ENCODE measurements at regions of chr9 and their contacts with region 1.

Region 1: DNA sequence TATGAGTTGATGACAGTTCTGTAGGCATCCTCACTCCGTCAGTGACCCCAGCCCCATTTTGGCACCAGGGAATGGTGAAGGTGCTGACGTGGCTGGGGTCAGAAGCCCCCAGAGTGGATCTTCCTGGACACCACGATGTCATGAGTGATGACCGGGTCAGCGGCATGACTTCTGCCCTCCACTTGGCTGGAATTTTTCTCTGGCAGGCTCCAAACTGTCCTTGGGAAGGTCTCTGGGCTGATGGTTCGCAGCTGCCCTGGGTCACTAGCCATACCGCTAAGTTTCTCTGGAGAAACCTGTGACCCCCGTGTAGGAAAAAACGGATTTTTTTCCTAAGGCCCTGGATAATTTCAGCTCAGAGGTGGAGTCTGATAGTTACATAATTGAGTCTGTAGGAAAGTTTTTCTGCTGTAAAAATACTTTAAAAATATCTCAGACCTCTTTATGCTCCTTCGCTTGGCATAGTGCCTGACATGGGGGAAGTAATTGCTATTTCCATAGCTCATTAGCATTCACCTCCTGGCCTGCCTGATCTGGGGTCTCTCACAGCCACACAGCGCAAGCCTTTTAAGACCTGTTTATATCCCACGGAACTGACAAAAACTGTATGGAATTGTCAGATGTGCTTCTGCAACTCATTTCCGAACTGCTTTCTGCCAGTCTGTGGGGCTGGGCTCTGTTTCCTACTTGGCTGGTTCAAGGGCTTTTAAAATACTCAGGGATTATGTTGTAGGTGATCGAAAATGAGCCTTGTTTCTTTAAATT is 69.2 kb downstream of the ANGPTL2 start:
- DNase-seq: peak; percentile 17 to 55
- ATAC-seq: peak in 5 of 8 donors; percentile 5 to 47 (median 42)
- H3K4me3 ChIP-seq: no peak overlapping the region
- H3K27ac ChIP-seq: peak overlapping the region in 9 of 10 donors; percentile 36 to 81 (median 68)
- H3K4me1 ChIP-seq: peaks cover 22 to 100% (median 60%) of the 10 kb centered on the region in 9 donors
- H3K27me3 ChIP-seq: no peaks in the 10 kb centered on the region
- CTCF ChIP-seq: no peak

Region 2: DNA sequence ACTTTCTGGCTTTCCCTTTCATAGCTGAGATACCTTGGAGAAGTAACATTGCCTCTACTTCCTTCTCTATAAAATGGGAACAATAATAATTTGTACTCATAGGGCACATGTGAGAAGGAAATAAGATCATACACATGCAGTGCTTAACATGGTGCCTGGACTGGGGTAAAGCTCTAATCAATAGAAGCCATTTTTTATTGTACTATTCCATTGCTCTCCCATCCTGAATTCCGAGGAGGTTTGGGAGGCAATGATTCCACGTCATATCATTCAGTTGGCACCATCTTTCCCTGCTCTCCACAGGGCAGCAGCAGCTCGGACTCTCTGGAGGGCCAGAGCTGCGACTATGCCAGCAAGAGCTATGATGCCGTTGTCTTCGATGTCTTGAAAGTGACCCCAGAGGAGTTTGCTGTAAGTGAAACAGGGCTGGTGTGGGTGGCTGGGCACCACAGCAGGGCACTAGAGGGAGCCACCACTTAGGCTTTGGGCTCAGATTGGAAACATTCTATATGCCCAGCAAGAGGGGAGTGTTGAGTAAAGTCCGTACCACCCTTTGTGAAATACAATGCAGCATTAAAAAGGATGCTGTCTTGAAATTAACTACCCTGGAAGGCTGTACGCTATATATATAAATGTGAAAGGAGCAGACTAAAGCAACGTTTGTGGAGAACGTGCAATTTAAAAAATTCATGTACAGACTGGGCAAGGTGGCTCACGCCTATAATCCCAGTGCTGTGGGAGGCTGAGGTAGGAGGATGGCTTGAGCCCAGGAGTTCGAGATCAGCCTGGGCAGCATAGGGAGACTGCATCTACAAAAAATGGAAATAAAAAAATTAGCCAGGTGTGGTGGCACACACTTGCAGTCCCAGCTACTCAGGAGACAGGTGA is 87.5 kb before region 1 on chr9:
- intact Hi-C with region 1: loop called in 2 of 10 experiments (anchors 5 to 10 kb)
- DNase-seq: peak; percentile 52 to 55
- ATAC-seq: peak; percentile 65 to 88 (median 84)
- H3K4me3 ChIP-seq: no peak overlapping the region
- H3K27ac ChIP-seq: peak overlapping the region; percentile 3 to 81 (median 62)
- H3K4me1 ChIP-seq: peaks cover 0 to 34% (median 10%) of the 10 kb centered on the region in 9 donors
- H3K27me3 ChIP-seq: no peaks in the 10 kb centered on the region
- CTCF ChIP-seq: peak; percentile 59 to 89 (median 80)

Region 3: DNA sequence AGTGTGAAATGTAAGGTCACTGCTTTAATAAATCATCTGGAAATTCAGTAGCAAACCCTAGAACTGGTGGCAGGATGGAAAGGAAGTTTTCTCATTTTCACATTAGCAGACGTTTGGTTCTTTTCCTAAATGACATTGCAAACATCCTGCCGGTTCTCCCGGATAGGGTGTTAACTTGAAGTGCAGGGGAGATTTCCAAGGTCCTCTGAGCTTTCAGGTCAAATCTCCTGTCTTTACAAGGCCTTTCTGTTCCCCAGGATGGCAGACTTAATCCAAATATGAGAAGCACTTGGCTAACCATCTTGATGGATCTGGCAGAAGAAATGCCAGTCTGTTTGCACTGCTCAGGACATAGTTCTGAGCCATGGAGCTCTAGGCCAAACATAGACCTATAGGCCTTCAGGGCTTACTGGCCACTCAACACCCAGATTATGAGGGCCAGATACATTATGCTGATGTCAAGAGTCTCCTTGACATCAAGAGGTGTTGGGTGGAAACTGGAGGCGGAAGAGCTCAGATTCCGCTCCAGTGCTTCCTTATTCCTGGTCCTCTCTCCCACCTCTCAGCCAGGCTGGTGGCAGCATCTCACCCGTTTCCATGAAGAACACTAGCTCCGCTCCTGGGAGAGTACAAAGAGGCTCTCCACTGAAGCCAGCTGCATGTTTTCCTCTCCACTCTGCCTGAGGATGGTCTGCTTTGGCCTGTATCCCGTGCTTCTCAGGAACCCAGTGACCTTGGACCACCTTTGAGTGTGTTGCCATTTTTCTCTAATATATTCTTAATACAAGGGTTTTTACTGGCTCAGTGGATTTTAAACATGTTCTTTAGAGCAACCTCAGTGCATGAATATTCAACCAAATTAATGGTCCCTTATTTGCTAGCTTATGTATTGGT is 77.7 kb before region 1 on chr9:
- intact Hi-C with region 1: loop called in 1 of 10 experiments (anchors 10 kb)
- DNase-seq: no peak
- ATAC-seq: peak in 3 of 8 donors; percentile 20 to 60 (median 53)
- H3K4me3 ChIP-seq: no peak overlapping the region
- H3K27ac ChIP-seq: peak overlapping the region in 9 of 10 donors; percentile 7 to 72 (median 35)
- H3K4me1 ChIP-seq: peaks cover 0 to 30% (median 10%) of the 10 kb centered on the region in 9 donors
- H3K27me3 ChIP-seq: peaks cover 0 to 11% (median 0%) of the 10 kb centered on the region in 7 donors
- CTCF ChIP-seq: no peak

Region 4: DNA sequence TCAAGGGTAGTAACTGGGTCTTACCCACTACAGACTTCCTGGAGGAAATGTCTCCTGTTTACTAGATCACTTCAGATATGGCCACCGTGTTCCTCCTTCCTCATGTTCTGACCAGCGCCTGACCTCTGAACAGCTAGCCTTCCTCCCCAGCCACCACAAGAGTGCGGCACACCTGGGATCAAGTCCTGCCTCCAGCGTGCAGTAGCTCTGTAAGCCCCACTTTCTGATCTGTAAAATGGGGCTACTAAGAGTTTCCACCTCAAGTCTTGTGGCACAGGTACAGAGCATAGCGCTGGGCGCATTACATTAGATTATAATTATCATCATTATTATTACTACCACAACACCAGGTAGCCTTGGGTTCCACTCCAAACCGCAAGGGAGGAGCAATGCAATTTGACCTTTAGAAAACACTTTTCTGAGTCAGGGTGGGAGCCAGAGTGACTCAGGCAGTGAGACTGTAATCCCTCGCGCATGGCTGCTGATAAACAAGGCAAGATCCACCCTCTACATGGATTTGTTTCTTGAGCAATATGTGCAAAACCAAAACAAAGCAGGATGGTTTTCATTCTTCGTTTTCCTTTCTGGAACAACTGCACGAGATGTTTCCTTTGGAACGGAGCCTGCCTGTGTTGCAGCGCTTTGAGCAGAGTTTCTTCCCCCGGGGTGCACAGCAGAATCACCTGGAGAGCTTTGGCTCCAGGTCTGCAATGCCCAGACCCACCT is 134.2 kb after region 1 on chr9:
- intact Hi-C with region 1: loop called in 2 of 10 experiments (anchors 5 to 10 kb)
- DNase-seq: peak in 1 of 2 donors; percentile 61
- ATAC-seq: peak; percentile 27 to 65 (median 38)
- H3K4me3 ChIP-seq: no peak overlapping the region
- H3K27ac ChIP-seq: peak overlapping the region; percentile 77 to 97 (median 88)
- H3K4me1 ChIP-seq: peaks cover 26 to 63% (median 54%) of the 10 kb centered on the region in 9 donors
- H3K27me3 ChIP-seq: no peaks in the 10 kb centered on the region
- CTCF ChIP-seq: no peak

Region 5: GRCh38 chr9:127263664-127264063 is 210.4 kb after region 1 on chr9:
- intact Hi-C with region 1: no loop called
- DNase-seq: peak in 1 of 2 donors; percentile 50
- ATAC-seq: peak in 6 of 8 donors; percentile 50 to 83 (median 74)
- H3K4me3 ChIP-seq: peak overlapping the region in 6 of 10 donors; percentile 25 to 49 (median 44)
- H3K27ac ChIP-seq: peak overlapping the region in 6 of 10 donors; percentile 63 to 80 (median 72)
- H3K4me1 ChIP-seq: peaks cover 0 to 47% (median 21%) of the 10 kb centered on the region in 9 donors
- H3K27me3 ChIP-seq: no peaks in the 10 kb centered on the region
- CTCF ChIP-seq: no peak